Heart right ventricle (tissue), 16 donors: ENCODE measurements at regions of chrX and their contacts with region 1.

Region 1: DNA sequence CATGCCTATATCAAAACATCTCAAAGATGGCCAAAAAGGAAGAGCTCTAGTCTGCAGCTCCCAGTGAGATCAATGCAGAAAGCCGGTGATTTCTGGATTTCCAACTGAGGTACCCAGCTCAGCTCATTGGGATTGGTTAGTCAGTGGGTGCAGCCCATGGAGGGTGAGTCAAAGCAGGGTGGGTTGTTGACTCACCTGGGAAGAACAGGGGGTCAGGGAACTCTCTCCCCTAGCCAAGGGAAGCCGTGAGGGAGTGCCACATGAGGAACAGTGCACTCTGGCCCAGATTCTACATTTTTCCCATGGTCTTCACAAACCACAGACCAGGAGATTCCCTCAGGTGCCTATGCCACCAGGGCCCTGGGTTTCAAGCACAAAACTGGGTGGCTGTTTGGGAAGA is 57.3 kb upstream of the FGF16 start:
- DNase-seq: no peak
- ATAC-seq: no peak
- H3K4me3 ChIP-seq: no peak overlapping the region
- H3K27ac ChIP-seq: no peak overlapping the region
- H3K4me1 ChIP-seq: no peaks in the 10 kb centered on the region
- H3K27me3 ChIP-seq: no peaks in the 10 kb centered on the region
- CTCF ChIP-seq: no peak

Region 2: GRCh38 chrX:77223046-77223445 is 166.8 kb before region 1 on chrX:
- intact Hi-C with region 1: loop called in 1 of 10 experiments (anchors 5 kb)
- DNase-seq: no peak
- ATAC-seq: no peak
- H3K4me3 ChIP-seq: no peak overlapping the region
- H3K27ac ChIP-seq: no peak overlapping the region
- H3K4me1 ChIP-seq: no peaks in the 10 kb centered on the region
- H3K27me3 ChIP-seq: peaks cover 0 to 10% (median 0%) of the 10 kb centered on the region in 7 donors
- CTCF ChIP-seq: no peak

Region 3: DNA sequence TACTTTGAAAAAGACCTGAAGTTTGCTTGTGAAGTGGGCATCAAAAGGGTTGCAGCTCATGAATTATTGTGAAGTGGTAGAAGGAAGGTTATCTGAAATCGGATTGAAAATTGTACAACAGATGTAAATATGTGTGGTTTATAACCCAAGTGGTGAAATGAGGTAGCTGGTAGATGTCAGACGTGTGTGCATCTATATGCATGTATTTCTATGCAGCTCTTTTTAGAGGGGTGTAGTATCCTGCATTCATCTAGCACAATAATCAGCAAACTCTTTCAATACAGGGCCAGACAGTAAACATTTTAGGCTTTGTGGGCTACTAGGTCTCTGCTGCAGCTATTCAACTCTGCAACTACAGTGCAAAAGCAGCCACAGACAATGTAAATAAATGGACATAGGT is 386.8 kb after region 1 on chrX:
- intact Hi-C with region 1: no loop called
- DNase-seq: no peak
- ATAC-seq: no peak
- H3K4me3 ChIP-seq: no peak overlapping the region
- H3K27ac ChIP-seq: no peak overlapping the region
- H3K4me1 ChIP-seq: peaks cover 0 to 16% (median 6%) of the 10 kb centered on the region in 9 donors
- H3K27me3 ChIP-seq: no peaks in the 10 kb centered on the region
- CTCF ChIP-seq: no peak

Region 4: DNA sequence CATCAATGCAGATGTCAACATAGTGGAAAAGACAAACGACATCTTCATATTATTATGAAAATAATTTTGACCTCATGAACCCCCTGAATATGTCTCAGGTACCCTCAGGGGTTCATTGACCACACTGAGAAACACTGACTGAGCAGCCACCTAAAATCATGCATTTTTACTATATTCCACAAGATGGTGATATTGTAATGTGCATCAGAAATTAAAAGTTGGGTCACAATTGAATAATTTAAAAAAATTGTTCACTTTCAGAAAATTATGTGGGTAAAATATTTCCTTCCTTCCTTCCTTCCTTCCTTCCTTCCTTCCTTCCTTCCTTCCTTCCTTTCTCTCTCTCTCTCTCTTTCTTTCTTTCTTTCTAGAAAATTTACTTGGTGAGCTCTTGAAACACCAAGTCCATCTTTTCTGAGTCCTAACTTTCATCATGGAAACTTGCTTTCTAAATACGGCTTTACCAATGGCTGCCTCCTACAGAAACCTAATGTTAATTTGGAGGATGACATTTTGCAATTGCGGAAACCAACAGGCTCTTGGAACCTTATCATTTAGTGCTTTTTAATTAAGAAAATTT is 1165.6 kb after region 1 on chrX:
- intact Hi-C with region 1: no loop called
- DNase-seq: no peak
- ATAC-seq: no peak
- H3K4me3 ChIP-seq: no peak overlapping the region
- H3K27ac ChIP-seq: no peak overlapping the region
- H3K4me1 ChIP-seq: no peaks in the 10 kb centered on the region
- H3K27me3 ChIP-seq: no peaks in the 10 kb centered on the region
- CTCF ChIP-seq: peak; percentile 6 to 60 (median 45)